ENCODE measurements at regions of chr17 and their contacts with region 1.

Region 1: DNA sequence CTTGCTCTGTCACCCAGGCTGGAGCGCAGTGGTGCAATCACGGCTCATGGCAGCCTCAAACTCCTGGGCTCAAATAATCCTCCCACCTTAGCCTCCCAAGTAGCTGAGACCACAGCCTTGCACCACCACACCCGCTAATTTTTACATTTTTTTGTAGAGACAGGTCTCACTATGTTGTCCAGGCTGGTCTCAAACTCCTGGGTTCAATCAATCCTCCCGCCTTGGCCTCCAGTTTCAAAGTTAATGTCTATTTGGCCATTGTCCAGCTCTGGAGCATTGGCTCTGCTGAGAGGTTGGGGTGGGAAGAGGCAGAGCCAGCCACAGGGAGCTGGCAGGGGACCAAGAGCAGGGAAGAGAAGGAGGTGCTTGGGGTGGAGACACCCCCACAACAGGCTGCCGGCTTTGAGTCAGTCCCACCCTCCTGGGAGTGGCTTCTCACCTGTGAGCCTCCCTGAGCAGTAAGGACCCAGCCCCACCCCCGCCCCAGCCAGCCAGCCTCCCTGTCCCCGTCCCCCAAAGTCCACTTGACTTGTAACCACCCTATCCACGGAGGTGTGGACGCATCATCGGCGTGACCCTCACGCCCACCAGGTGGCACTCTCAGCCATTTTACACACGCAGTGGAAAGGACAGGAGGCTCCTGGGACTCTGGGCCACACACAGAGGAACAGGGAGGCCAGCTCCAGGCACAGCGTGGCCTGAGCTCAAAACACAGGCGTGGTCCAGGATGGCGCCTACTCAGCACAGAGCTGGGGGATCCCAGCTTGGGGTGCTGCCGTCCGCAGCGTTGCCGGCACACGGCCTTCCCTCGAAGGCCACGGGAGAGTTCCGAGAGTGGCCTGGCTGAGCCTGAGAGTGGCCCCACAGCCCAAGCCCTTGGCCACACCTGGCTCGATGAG is 22.8 kb upstream of the PVALEF start:
- DNase-seq: peak; percentile 81 to 94 (median 86)
- H3K4me3 ChIP-seq: no peak overlapping the region
- H3K27ac ChIP-seq: no peak overlapping the region
- H3K4me1 ChIP-seq: peaks cover 0 to 9% of the 10 kb centered on the region in 2 donors
- H3K27me3 ChIP-seq: no peaks in the 10 kb centered on the region
- CTCF ChIP-seq: peak; percentile 58 to 82 (median 72)
- POLR2A ChIP-seq: no peak

Region 2: GRCh38 chr17:81194941-81195901 is 52.7 kb after region 1 on chr17:
- intact Hi-C with region 1: loop called (anchors 5 kb)
- DNase-seq: no peak
- H3K4me3 ChIP-seq: no peak overlapping the region
- H3K27ac ChIP-seq: no peak overlapping the region
- H3K4me1 ChIP-seq: no peaks in the 10 kb centered on the region
- H3K27me3 ChIP-seq: no peaks in the 10 kb centered on the region
- CTCF ChIP-seq: no peak
- POLR2A ChIP-seq: no peak

Region 3: GRCh38 chr17:81200695-81201580 is 58.4 kb after region 1 on chr17:
- intact Hi-C with region 1: loop called (anchors 5 kb)
- DNase-seq: peak; percentile 55 to 84 (median 70)
- H3K4me3 ChIP-seq: no peak overlapping the region
- H3K27ac ChIP-seq: no peak overlapping the region
- H3K4me1 ChIP-seq: no peaks in the 10 kb centered on the region
- H3K27me3 ChIP-seq: no peaks in the 10 kb centered on the region
- CTCF ChIP-seq: peak; percentile 57 to 67 (median 63)
- POLR2A ChIP-seq: no peak

Region 4: DNA sequence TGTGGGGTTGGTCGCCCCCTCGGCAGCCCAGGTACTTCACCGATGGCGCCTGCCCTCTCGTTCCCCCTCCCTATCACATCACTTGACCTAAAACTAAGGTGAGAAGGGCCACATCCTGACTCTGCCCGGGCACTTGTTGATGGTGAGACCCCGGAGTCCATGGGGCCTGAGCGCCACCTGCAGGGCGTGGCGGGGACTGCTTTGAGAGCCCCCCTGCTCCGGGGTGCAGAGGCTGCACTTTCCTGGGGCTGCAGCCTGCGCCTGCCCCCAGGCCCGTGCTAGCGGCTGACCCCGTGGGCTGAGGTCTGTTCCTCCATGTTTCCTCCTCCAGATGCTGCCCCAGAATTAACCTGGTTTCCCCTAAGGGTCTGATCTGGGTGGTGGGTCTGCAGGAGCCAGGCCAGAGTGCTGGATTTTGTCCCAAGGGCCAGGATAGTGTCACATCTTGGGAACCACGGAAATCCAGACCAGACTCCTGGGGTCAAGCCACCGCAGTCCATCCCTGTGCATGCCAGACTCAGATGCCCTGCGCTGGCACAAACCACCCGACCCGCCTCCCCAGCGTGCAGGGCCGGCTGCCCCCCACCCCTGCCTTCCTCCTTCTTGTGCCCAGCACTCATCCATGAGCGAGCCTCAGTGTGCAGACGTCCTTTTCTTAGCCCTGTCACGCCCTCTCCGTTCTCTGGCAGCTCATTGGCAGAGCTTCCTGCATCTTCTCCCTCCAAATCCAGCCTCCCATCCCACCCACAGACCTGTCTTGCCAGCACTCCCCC is 99.3 kb after region 1 on chr17:
- intact Hi-C with region 1: loop called in 1 of 2 experiments (anchors 5 kb)
- DNase-seq: peak in 6 of 7 donors; percentile 45 to 81 (median 64)
- H3K4me3 ChIP-seq: no peak overlapping the region
- H3K27ac ChIP-seq: no peak overlapping the region
- H3K4me1 ChIP-seq: peaks cover 15 to 25% of the 10 kb centered on the region in 2 donors
- H3K27me3 ChIP-seq: no peaks in the 10 kb centered on the region
- CTCF ChIP-seq: peak; percentile 43 to 79 (median 63)
- POLR2A ChIP-seq: no peak

Region 5: DNA sequence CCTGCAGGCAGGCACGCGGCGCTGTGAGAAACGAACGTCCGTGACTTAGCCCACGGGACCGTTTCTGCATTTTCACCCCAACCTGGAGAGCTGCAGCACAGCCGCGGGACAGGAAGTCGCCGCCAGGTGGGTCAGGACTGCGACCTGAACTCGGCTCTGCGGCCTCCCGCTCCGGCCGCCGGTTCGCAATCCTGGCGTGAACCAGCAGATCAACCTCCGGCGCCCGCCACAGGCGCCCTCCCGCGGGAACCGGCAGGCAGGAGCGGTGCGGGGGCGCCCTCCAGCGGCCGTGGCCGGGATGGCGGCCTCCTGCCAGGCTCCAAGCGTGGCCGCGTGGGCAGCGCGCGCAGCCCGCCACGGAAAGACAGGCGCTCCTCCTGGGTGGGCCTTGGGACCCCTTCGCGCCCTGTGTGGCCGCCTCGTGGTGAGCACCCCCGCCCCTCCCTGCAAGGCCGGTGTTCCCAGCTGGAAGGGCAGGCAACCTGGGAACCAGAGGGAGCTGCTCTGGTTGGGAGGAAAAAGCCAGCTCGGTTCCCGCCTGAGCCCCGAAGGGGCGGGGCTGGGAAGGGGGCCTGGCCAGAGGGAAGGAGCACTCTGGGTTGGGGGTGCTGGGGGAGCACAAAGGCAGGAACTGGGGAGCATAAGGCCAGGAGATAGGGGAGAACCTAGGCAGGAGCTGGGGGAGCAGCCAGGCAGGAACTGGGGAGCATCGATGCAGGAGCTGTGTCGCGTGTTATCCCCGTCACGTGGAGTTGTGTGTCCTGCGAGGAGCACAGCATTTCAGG is 341.8 kb after region 1 on chr17:
- intact Hi-C with region 1: loop called in 1 of 2 experiments (anchors 10 kb)
- DNase-seq: peak; percentile 83 to 90 (median 89)
- H3K4me3 ChIP-seq: peak overlapping the region in 2 of 4 donors; percentile 15 to 44
- H3K27ac ChIP-seq: no peak overlapping the region
- H3K4me1 ChIP-seq: peaks cover 26 to 54% of the 10 kb centered on the region in 2 donors
- H3K27me3 ChIP-seq: no peaks in the 10 kb centered on the region
- CTCF ChIP-seq: peak; percentile 56 to 100 (median 84)
- POLR2A ChIP-seq: peak in 1 of 2 donors; percentile 34